ENCODE measurements at regions of chr1 and their contacts with region 1.

Region 1: DNA sequence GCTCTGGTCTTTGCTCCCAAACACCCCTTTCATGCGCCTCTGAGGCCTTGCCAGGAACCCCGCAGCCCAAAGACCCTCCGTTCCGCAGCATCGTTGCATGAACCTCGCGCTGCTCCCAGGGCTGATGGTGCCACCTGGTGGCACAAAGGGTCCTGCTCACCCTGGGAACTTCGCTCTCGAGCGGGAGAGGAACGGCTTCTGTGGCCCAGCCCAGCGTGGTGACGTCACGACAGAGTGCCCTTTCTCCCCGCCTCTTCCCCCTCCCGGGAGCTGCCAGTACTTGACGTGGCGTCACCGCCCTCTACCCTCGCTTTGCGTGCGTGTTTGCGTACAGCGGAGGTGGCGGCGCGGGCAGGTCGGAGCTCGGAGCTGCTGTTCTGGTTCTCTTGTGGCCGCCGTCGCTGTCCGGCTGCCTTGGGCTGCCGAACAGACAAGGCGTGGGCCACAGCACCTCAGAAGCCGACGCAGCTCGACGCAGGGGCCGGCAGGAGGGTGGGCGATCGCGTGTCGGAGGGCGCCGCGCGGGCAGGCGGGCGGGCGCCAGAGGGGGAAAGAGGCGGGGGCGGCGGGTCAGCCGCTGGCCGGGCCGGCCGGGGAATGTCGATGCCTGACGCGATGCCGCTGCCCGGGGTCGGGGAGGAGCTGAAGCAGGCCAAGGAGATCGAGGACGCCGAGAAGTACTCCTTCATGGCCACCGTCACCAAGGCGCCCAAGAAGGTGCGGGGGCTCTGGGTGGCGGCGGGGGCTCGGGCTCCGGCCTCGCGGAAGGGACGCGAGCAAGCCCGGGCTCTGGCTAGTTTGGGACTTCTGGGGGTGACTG is at the start of gene AHCYL1:
- DNase-seq: peak; percentile 100
- H3K4me3 Mint-ChIP-seq: peak within 1 kb of the TSS; percentile 97
- H3K27ac Mint-ChIP-seq: peak within 1 kb of the TSS; percentile 92
- H3K4me1 Mint-ChIP-seq: peaks cover 28% of the 10 kb centered on the region
- H3K27me3 Mint-ChIP-seq: no peaks in the 10 kb centered on the region
- total RNA-seq, gene AHCYL1: 70.0 to 75.1 TPM

Region 2: GRCh38 chr1:109426278-109427170 is 558.1 kb before region 1 on chr1 and contains the start of gene PSMA5:
- CTCF ChIA-PET with region 1: no interaction called
- intact Hi-C with region 1: loop called (anchors 10 kb)
- DNase-seq: peak; percentile 98
- H3K4me3 Mint-ChIP-seq: peak within 1 kb of the TSS; percentile 94
- H3K27ac Mint-ChIP-seq: peak within 1 kb of the TSS; percentile 97
- H3K4me1 Mint-ChIP-seq: peaks cover 33% of the 10 kb centered on the region
- H3K27me3 Mint-ChIP-seq: no peaks in the 10 kb centered on the region
- total RNA-seq, gene PSMA5: 181 to 202 TPM

Region 3: DNA sequence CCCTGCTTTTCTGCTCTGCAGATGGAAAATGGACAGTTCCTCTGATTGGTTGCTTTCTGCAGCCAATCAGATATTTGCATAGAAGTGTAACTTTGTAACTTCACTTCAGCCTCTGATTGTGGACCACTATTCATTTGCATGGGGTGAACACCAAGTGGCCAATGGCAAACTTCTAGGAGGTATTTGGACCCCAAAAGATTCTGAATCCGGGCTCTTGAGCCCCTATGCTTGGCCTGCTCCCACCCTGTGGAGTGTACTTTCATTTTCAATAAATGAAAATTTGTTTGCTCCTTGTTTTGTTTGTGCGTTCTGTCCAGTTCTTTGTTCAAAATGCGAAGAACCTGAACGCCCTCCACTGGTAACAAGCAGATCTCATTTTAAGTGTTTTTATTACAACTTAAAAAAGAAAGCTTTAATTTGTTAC is 335.2 kb before region 1 on chr1:
- CTCF ChIA-PET with region 1: interaction called, 19 read pairs
- intact Hi-C with region 1: no loop called
- DNase-seq: no peak
- H3K4me3 Mint-ChIP-seq: no peak overlapping the region
- H3K27ac Mint-ChIP-seq: no peak overlapping the region
- H3K4me1 Mint-ChIP-seq: no peaks in the 10 kb centered on the region
- H3K27me3 Mint-ChIP-seq: peaks cover 6% of the 10 kb centered on the region

Region 4: DNA sequence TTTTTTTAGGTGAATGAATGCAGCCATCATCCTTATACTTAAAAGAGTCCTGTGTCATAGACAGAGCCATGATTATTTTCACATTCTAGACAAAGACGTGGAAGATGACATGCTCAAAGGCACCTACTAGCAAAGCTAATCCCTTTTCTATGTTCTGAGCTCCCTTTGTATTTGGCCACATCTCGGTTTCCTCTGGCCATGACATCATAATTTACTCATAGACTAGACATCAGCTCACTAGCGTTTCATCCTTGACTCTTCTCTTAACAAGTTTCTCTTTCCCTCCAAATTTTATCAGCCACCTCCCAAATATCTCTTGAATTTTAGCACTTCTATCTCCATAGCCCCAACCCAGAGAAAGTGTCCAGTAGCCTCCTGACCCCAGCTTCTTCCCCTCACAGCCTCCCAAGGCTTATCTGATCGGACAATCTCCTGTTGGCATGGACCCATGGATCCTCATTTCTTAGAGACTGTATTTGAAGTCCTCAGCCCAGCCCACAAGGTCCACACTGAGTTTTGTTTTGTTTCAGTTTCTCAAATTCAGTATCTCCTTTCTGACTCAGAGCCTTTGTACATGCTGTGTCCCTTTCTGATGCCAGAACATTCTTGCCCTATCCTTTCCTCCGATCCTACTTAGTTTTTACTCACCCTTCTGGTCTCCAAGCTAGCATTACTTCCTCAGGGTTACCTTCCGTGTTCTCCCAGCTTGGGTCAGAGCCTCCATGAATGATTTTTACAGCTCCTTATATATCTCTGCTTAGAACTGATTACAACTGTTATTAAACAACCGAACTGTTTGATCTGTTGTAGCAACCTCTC is 188.0 kb before region 1 on chr1:
- CTCF ChIA-PET with region 1: interaction called, 622 read pairs
- intact Hi-C with region 1: loop called (anchors 5 kb)
- DNase-seq: no peak
- H3K4me3 Mint-ChIP-seq: no peak overlapping the region
- H3K27ac Mint-ChIP-seq: peak overlapping the region; percentile 6
- H3K4me1 Mint-ChIP-seq: peaks cover 48% of the 10 kb centered on the region
- H3K27me3 Mint-ChIP-seq: no peaks in the 10 kb centered on the region

Region 5: GRCh38 chr1:109923131-109923945 is 61.3 kb before region 1 on chr1:
- CTCF ChIA-PET with region 1: interaction called, 13 read pairs
- intact Hi-C with region 1: no loop called
- DNase-seq: no peak
- H3K4me3 Mint-ChIP-seq: no peak overlapping the region
- H3K27ac Mint-ChIP-seq: no peak overlapping the region
- H3K4me1 Mint-ChIP-seq: no peaks in the 10 kb centered on the region
- H3K27me3 Mint-ChIP-seq: no peaks in the 10 kb centered on the region

Region 6: GRCh38 chr1:110011527-110012041 is 26.9 kb after region 1 on chr1:
- CTCF ChIA-PET with region 1: interaction called, 22 read pairs
- intact Hi-C with region 1: loop called (anchors 1 kb)
- DNase-seq: peak; percentile 51
- H3K4me3 Mint-ChIP-seq: no peak overlapping the region
- H3K27ac Mint-ChIP-seq: no peak overlapping the region
- H3K4me1 Mint-ChIP-seq: no peaks in the 10 kb centered on the region
- H3K27me3 Mint-ChIP-seq: no peaks in the 10 kb centered on the region

Region 7: DNA sequence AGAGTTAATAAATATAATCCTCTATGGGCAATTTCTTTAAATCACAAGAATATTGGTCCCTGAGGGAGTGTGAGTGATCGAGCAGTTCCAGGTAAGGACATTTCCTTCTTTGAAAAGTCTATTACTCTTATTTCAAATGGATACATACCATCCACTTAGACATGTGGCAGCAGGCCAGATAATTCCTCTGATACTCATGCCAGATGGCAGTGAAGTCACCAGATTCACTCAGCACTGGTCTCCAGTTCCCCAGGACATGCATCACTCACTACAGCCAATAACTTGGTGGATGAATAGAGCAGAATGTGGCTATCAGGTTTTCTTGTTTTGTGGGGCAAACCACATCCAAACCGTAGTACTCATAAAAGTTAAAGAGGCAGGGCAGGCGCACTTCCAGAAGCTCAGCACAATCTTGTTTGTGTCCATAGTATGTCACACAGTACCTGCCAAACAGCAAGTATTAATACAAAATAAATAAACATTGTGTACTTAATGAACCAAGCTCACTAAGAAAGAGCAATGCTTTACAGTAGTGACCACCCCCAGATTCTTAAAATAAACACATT is 814.1 kb after region 1 on chr1:
- CTCF ChIA-PET with region 1: no interaction called
- intact Hi-C with region 1: no loop called
- DNase-seq: no peak
- H3K4me3 Mint-ChIP-seq: no peak overlapping the region
- H3K27ac Mint-ChIP-seq: no peak overlapping the region
- H3K4me1 Mint-ChIP-seq: no peaks in the 10 kb centered on the region
- H3K27me3 Mint-ChIP-seq: no peaks in the 10 kb centered on the region

Measured in activated naive CD4-positive, alpha-beta T cell treated with anti-CD3 and anti-CD28 coated beads for 36 hours (primary cell).